ENCODE measurements at regions of chr2 and their contacts with region 1.

Region 1: GRCh38 chr2:207166039-207166348 is 246 bp upstream of the KLF7 start:
- DNase-seq: peak; percentile 99
- ATAC-seq: peak; percentile 92 to 96 (median 93)
- H3K4me3 ChIP-seq: peak overlapping the region; percentile 57 to 98 (median 82)
- H3K27ac ChIP-seq: peak overlapping the region; percentile 96 to 100 (median 100)
- H3K4me1 ChIP-seq: peaks cover 3 to 44% (median 40%) of the 10 kb centered on the region in 9 donors
- H3K27me3 ChIP-seq: no peaks in the 10 kb centered on the region
- CTCF ChIP-seq: no peak

Region 2: DNA sequence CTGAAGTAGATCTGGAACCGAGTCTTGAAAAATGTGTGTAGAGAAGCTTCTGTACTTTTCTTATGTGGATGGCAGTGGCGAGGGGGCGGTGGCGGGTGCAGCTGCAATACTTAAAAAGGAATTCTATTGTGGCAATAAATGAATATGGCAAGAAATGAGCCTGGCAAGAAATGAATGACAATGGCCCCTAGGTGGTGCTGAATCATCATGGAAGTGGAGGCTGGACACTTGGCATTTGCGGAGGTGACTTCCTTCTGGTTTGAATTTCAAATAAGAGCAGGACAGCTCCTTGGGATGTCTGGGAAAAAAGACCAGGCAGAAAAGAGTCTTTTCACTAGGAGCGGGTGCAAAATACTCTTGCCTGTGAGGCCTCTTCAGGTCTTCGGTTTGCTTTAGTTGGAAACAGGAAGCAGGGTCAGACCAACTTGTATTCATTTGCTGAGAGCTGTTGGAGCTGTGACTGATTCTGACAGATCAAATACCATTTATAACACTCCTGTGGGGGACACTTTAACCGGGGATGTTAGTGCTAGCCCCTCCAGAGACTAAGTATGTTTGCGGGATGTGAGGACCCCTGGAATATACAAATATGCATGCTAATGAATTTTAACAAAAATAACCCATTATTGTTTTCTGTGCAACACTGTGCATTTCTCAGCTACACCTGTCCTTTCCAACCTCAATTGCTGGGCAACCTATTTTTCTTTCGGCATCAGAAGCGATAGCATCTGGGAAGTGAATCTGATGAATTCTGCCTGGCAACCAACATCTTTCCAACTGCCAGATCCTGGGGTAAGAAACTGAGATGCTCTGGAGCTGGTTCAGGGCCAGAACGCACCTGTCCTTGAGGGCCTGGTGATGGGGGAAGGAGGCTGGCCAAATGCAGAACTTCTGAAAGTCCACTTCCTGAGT is 365.2 kb before region 1 on chr2:
- intact Hi-C with region 1: loop called in 4 of 10 experiments (anchors 5 to 10 kb)
- DNase-seq: peak; percentile 21 to 75
- ATAC-seq: peak; percentile 51 to 86 (median 82)
- H3K4me3 ChIP-seq: peak overlapping the region in 4 of 10 donors; percentile 6 to 22 (median 17)
- H3K27ac ChIP-seq: no peak overlapping the region
- H3K4me1 ChIP-seq: peaks cover 0 to 32% (median 12%) of the 10 kb centered on the region in 9 donors
- H3K27me3 ChIP-seq: no peaks in the 10 kb centered on the region
- CTCF ChIP-seq: peak; percentile 50 to 82 (median 75)

Region 3: GRCh38 chr2:207073801-207074678 is 92.0 kb before region 1 on chr2:
- intact Hi-C with region 1: loop called in 2 of 10 experiments (anchors 5 kb)
- DNase-seq: peak in 1 of 2 donors; percentile 53
- ATAC-seq: peak; percentile 53 to 85 (median 66)
- H3K4me3 ChIP-seq: peak overlapping the region in 5 of 10 donors; percentile 1 to 31 (median 18)
- H3K27ac ChIP-seq: peak overlapping the region in 9 of 10 donors; percentile 17 to 75 (median 52)
- H3K4me1 ChIP-seq: peaks cover 0 to 41% (median 28%) of the 10 kb centered on the region in 9 donors
- H3K27me3 ChIP-seq: no peaks in the 10 kb centered on the region
- CTCF ChIP-seq: peak in 1 of 9 donors; percentile 35

Region 4: DNA sequence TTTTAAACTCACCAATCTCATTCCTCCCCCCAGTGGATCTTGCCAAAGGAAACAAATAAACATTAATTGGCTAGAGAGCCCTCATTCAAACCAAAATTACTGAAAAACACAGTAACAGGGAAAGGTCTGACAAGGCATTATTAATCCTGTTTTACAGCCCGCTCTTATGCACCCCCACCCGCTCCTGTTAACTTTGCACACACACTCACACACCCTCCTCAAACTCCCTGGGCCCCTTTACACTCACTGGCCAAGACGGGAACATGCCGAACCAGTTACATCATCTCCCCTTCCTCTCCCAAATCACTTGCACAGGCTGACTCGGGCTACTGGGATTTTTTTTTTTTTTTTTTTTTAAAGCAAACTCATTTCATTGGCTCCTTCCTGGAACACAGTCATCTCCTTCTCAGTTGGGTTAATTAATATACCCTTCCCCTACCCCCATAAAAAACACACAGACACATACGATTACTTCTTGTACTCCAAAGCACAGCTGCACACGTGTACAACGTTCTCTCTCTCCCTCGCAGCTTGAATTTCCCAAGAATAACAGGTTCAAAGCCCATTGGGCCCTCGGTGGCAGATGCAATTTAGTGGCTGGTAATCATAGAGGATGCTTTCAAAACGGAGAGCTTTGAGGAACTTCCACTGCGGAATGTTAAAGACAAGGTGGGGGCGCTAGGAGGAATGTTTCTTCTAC is 32.0 kb before region 1 on chr2:
- intact Hi-C with region 1: loop called in 5 of 10 experiments (anchors 1 to 2 kb)
- DNase-seq: peak; percentile 56 to 88
- ATAC-seq: peak; percentile 93 to 98 (median 96)
- H3K4me3 ChIP-seq: peak overlapping the region in 4 of 10 donors; percentile 5 to 32 (median 18)
- H3K27ac ChIP-seq: peak overlapping the region; percentile 76 to 94 (median 87)
- H3K4me1 ChIP-seq: peaks cover 40 to 100% (median 96%) of the 10 kb centered on the region in 9 donors
- H3K27me3 ChIP-seq: no peaks in the 10 kb centered on the region
- CTCF ChIP-seq: no peak

Region 5: DNA sequence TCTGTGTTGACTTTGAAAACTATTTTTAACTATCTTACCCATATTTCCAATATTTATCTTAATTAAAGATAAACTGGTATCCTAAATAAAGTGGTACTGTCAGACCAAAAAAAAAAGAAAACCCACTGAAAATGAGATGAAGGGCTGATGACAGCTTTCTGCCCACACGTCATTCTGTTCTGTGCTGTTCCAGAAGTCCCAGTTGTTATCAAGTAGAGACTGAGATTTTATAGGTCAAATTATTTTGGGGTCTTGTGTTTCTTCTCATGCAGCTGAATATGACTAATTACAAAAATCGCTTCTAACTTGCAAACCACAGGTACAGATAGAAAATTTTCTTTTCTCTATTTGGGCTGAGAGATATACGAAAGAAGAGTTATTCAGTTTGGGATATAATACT is 48.5 kb after region 1 on chr2:
- intact Hi-C with region 1: no loop called
- DNase-seq: no peak
- ATAC-seq: peak in 2 of 8 donors; percentile 37 to 42
- H3K4me3 ChIP-seq: no peak overlapping the region
- H3K27ac ChIP-seq: no peak overlapping the region
- H3K4me1 ChIP-seq: no peaks in the 10 kb centered on the region
- H3K27me3 ChIP-seq: no peaks in the 10 kb centered on the region
- CTCF ChIP-seq: no peak

Region 6: DNA sequence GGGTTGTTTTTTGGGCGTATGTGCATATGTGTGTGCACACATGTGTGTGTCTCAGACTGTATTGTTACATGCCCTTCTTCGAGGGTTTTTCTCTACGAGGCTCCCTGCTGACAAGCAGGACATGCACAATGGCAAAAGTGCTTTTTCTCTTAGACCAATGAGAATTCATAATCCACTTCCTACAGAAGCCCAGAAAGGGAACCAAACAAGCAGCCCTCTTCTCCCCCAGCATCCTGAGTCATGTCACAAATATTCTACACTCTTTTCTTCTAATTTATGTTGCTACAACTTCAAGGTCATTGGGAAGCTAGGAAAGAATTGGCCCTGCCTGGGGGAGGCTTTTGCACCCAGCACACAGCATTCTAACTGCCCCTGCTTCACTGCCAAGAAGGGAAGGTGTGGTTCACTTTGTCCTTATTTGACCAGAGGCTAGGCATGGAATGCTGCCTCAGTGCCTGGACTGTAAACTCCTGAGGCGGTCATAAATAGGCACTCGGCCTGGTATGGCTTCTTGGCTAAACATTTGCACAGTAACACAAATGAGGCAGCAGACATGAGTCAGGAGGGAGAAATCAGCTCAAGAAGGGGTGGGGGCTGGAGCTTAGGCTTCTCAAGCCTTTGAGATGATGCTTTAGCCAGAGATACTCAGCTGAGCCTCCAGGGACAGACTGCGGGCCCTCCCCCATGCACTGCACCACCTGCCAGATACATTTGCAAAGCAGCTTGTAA is 92.4 kb after region 1 on chr2:
- intact Hi-C with region 1: loop called in 2 of 10 experiments (anchors 2 to 5 kb)
- DNase-seq: peak; percentile 34 to 71
- ATAC-seq: peak; percentile 78 to 90 (median 86)
- H3K4me3 ChIP-seq: no peak overlapping the region
- H3K27ac ChIP-seq: peak overlapping the region in 9 of 10 donors; percentile 39 to 69 (median 65)
- H3K4me1 ChIP-seq: peaks cover 15 to 58% (median 40%) of the 10 kb centered on the region in 9 donors
- H3K27me3 ChIP-seq: no peaks in the 10 kb centered on the region
- CTCF ChIP-seq: no peak

Region 7: DNA sequence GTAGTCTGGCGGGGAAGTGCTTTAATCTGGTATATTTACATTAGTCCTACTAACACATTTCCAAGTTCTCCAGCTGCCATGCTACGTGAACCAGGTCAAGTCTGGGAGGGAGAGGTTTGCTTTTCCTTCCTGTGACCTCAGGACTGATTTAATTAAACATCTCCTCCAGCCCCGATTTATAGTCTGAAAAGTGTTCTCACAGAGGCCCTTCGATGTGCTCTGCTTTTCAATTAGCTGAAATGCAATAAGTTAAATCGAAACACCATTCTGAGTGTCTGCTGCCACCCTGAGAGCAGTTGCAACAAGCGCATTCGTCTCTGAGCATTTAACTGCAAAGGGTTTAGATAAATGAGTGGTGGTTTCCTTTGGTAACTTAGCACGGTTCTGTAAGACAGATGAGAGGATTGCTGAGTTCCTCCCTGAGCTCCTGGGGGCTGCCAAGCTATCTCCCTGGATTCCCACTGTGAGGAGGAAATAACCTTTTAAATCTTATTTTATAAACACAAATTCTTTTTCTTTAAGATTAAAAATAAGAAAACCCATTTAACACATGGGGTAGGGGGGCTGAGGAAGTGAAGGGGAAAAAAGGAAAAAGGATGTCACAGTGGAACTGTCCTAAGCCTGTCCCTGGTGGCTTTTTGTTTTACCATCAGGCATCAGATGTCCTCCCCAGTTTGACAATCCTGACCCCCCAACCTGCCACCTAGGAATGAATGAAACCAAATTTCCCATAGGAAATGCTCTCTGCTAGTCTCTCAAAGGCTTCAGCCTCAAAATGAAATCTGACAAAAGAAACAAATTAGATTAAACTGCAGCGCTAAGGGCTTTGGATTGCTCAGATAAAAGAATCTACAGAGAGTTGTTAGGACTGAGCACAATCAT is 307.3 kb after region 1 on chr2:
- intact Hi-C with region 1: loop called in 7 of 10 experiments (anchors 2 to 10 kb)
- DNase-seq: peak in 1 of 2 donors; percentile 62
- ATAC-seq: peak; percentile 68 to 89 (median 87)
- H3K4me3 ChIP-seq: peak overlapping the region in 3 of 10 donors; percentile 9 to 34 (median 18)
- H3K27ac ChIP-seq: peak overlapping the region in 5 of 10 donors; percentile 32 to 52 (median 42)
- H3K4me1 ChIP-seq: peaks cover 0 to 30% (median 23%) of the 10 kb centered on the region in 9 donors
- H3K27me3 ChIP-seq: no peaks in the 10 kb centered on the region
- CTCF ChIP-seq: peak; percentile 49 to 87 (median 67)

Region 8: DNA sequence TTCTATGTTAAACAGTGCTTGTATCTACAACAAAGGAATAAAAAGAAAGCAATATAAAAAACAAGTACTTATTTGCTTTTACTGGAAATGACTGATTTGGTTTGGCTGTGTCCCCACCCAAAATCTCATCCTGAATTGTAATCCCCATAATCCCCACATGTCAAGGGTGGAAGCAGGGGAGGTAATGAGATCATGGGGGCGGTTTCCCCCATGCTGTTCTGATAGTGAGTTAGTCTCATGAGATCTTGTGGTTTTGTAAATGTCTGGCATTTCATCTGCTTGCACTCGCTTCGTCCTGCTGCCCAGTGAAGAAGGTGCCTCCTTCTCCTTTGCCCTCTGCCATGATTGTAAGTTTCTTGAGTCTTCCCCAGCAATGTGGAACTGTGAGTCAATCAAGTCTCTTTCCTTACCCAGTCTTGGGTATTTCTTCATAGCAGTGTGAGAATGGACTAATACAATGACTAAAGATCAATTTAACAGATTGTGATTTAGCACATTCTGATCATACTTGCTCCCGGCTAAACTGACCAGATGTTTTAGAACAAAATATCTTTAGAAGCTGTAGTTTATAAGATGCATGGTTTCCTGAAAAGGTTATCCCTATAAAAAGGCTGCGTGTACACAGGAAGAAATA is 1260.5 kb after region 1 on chr2:
- intact Hi-C with region 1: no loop called
- DNase-seq: no peak
- ATAC-seq: no peak
- H3K4me3 ChIP-seq: no peak overlapping the region
- H3K27ac ChIP-seq: no peak overlapping the region
- H3K4me1 ChIP-seq: no peaks in the 10 kb centered on the region
- H3K27me3 ChIP-seq: peaks cover 0 to 6% (median 0%) of the 10 kb centered on the region in 7 donors
- CTCF ChIP-seq: no peak